Activated CD4-positive, alpha-beta T cell treated with anti-CD3 and anti-CD28 coated beads for 36 hours (primary cell): ENCODE measurements at regions of chr6 and their contacts with region 1.

Region 1: DNA sequence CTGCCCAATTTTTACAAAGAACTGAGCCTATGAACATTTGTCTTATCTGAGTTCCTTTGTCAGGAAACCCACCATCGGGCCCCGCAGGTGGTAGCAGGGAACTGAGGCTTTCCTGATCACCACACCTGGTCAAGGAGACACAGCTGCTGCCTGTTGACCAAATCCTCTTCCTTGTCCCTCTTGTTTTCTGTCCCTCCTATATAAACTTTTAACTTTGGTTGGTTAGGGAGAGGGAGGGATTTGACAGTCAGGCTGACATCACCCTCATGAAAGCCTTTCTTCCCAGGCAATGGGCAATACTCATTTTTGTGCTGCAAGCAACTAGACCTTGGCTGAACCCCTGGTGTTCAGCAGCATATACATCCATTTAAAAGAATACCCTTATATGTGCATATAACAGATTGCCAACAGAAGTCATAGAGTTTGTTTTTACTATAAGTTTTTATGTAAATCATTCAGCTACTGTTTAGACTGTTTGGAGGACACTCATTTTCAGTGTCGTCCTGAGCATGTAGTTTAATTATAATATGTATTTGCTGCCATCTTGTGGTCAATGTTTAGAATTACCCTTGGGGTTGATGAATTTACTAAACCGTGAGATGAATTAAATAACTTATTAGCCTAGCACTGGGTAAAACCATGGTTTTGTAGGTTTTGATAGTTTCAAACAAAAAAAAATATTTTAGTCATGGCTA is 17.0 kb downstream of the CRISP1 start:
- DNase-seq: no peak
- ATAC-seq: peak; percentile 53
- H3K4me3 Mint-ChIP-seq: no peak overlapping the region
- H3K27ac Mint-ChIP-seq: no peak overlapping the region
- H3K4me1 Mint-ChIP-seq: no peaks in the 10 kb centered on the region
- H3K27me3 Mint-ChIP-seq: peaks cover 5% of the 10 kb centered on the region

Region 2: DNA sequence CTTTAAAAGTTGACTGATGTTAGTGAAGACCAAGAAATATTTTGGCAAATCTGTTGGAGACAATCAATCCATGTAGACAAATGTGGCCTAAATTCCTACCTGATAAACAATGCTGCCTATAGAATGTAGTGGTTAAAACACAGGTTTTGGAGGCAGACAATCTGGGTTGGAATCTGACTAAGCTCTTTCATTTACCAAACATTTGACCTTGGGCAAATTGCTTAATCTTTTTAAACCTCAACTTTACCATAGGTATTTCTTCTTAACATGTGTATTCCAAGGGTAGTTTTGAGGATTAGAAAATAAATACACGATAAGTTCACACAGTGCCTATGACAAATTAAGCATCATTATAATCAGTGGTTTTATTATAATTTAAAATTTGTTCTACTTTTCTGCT is 224.2 kb before region 1 on chr6:
- CTCF ChIA-PET with region 1: interaction called, 5 read pairs
- POLR2A ChIA-PET with region 1: no interaction called
- intact Hi-C with region 1: loop called (anchors 1 to 2 kb)
- DNase-seq: no peak
- ATAC-seq: no peak
- H3K4me3 Mint-ChIP-seq: no peak overlapping the region
- H3K27ac Mint-ChIP-seq: no peak overlapping the region
- H3K4me1 Mint-ChIP-seq: no peaks in the 10 kb centered on the region
- H3K27me3 Mint-ChIP-seq: peaks cover 4% of the 10 kb centered on the region